ENCODE measurements at regions of chr1 and their contacts with region 1.

Region 1: DNA sequence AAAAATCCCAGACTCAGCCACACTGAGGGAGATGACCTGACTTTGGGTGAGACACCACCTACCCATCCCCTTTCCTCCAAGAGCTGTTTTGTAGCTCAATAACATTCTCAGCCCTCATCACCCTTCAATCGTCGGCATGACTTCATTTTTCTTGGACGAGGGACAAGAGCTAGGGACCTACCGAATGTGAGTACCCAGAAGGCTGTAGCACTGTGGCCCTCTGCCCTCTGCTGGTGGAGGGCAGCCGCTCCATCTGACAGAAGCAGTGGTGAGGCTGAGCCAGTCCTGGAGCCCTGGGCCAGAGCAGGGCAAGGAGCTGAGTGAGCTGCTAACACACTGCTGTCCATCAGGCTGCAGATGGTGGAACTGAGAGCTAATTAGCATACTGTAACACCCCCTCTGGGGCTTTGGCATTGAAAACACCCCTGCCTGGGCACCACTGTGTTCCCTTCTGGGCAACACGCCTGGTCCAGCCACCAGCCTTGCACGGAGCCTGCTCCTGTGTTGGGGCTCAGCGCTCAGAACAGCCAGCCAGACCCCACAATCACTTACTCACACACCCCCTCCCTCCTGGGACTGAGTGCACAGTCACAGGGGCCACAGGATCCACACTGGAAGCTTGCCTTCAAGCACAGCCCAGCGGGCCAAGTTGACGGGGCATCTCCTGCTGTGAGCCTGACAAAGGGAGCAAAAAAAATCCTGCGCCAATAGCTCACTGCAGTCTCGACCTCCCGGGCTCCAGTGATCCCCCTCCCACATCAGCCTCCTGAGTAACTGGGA is 18.3 kb upstream of the ALPL start:
- DNase-seq: no peak
- H3K4me3 ChIP-seq: no peak overlapping the region
- H3K27ac ChIP-seq: no peak overlapping the region
- H3K4me1 ChIP-seq: peaks cover 0 to 5% (median 0%) of the 10 kb centered on the region in 4 donors
- H3K27me3 ChIP-seq: peaks cover 0 to 52% (median 0%) of the 10 kb centered on the region in 4 donors
- CTCF ChIP-seq: peak; percentile 44 to 49 (median 46)
- EP300 ChIP-seq: no peak
- POLR2A ChIP-seq: no peak

Region 2: GRCh38 chr1:21378705-21379494 is 112.1 kb before region 1 on chr1:
- intact Hi-C with region 1: loop called (anchors 10 kb)
- DNase-seq: no peak
- H3K4me3 ChIP-seq: no peak overlapping the region
- H3K27ac ChIP-seq: no peak overlapping the region
- H3K4me1 ChIP-seq: no peaks in the 10 kb centered on the region
- H3K27me3 ChIP-seq: peaks cover 0 to 32% (median 0%) of the 10 kb centered on the region in 4 donors
- CTCF ChIP-seq: no peak
- EP300 ChIP-seq: no peak
- POLR2A ChIP-seq: no peak